AG04450 (cell line): ENCODE measurements at regions of chr7 and their contacts with region 1.

Region 1: GRCh38 chr7:35624299-35625186 is 70.4 kb downstream of the HERPUD2 start:
- DNase-seq: no peak
- H3K4me3 ChIP-seq: no peak overlapping the region
- H3K27ac ChIP-seq: no peak overlapping the region
- H3K27me3 ChIP-seq: no peaks in the 10 kb centered on the region
- CTCF ChIP-seq: peak; percentile 83

Region 2: GRCh38 chr7:35185907-35186731 is 438.4 kb before region 1 on chr7:
- CTCF ChIA-PET with region 1: interaction called, 10 read pairs
- POLR2A ChIA-PET with region 1: no interaction called
- DNase-seq: no peak
- H3K4me3 ChIP-seq: peak overlapping the region; percentile 54
- H3K27ac ChIP-seq: no peak overlapping the region
- H3K27me3 ChIP-seq: no peaks in the 10 kb centered on the region
- CTCF ChIP-seq: peak; percentile 22; the same call in 1 of the 2 replicates

Region 3: DNA sequence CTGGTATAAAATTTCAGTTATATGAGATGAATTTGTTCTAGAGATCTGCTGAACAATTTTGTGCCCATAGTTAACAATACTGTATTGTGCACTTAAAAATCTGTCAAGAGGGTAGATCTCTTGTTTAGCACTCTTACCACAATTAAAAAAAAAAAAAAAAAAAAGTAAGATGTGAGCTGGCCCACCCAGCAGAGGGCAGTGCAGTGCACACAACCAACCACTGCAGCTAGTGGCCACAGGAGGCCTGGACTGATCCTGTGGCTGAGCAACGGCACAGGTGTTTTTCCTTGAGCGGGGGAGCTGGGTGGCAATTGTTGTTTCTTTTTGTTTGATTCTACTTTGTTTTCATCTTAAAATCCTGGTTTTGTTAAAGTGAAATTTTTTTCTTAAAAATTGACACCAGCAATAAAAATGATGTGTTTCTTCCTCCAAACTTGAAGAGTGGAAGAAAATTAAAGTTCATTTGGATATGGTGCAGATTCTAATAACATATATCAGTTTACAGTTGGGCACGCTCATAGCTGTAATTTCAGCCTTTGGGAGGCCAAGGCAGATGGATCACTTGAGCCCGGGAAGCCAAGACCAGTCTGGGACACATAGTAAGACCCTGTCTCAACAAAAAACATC is 199.6 kb before region 1 on chr7:
- CTCF ChIA-PET with region 1: interaction called, 124 read pairs
- POLR2A ChIA-PET with region 1: no interaction called
- DNase-seq: peak; percentile 10
- H3K4me3 ChIP-seq: no peak overlapping the region
- H3K27ac ChIP-seq: no peak overlapping the region
- H3K27me3 ChIP-seq: no peaks in the 10 kb centered on the region
- CTCF ChIP-seq: peak; percentile 86

Region 4: GRCh38 chr7:35437619-35438275 is 186.8 kb before region 1 on chr7:
- CTCF ChIA-PET with region 1: no interaction called
- POLR2A ChIA-PET with region 1: no interaction called
- DNase-seq: no peak
- H3K4me3 ChIP-seq: no peak overlapping the region
- H3K27ac ChIP-seq: no peak overlapping the region
- H3K27me3 ChIP-seq: no peaks in the 10 kb centered on the region
- CTCF ChIP-seq: no peak

Region 5: DNA sequence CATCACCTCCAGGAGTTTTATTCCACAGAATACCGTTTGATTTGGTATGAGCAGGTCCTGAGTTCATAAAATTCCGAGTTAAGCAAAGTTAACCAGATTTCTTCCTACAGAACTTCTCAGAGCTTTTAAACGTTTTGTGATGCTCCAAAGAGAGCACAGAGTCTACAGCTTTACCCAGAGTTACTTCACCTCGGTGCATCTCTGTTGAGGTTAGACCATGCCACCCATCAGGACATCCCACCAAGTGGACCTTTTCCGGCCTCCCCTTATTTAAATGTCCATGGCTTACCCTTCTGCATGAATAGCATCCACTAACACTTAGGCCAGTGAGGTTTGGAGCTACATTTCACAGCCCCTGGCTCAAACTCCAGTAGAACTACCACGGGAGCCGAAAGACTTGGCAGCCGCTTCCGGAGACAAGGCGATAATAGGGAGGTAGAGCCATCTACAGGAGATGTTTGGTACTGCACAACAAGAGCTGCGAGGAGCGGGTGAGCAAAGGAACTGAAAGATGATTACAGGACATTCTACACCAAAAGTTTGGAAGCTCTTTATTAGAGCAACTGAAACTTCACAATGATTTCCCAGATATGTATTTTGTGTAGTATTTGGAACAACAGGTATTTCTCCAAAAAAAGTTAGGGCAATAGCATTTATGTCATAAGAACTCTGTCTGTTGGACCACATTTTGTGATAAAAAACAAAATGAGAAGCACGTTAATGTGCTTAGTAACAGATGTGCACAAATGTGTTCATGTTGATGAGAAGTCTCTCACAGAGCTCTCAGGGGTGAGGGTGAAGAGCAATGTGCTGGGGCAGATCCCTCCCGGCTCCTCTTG is 104.4 kb before region 1 on chr7:
- CTCF ChIA-PET with region 1: interaction called, 10 read pairs
- POLR2A ChIA-PET with region 1: no interaction called
- DNase-seq: peak; percentile 13
- H3K4me3 ChIP-seq: no peak overlapping the region
- H3K27ac ChIP-seq: no peak overlapping the region
- H3K27me3 ChIP-seq: no peaks in the 10 kb centered on the region
- CTCF ChIP-seq: peak; percentile 80

Region 6: GRCh38 chr7:35537067-35538023 is 87.2 kb before region 1 on chr7:
- CTCF ChIA-PET with region 1: interaction called, 11 read pairs
- POLR2A ChIA-PET with region 1: no interaction called
- DNase-seq: peak; percentile 18
- H3K4me3 ChIP-seq: peak overlapping the region; percentile 50
- H3K27ac ChIP-seq: no peak overlapping the region
- H3K27me3 ChIP-seq: peaks cover 9% of the 10 kb centered on the region
- CTCF ChIP-seq: peak; percentile 94

Region 7: GRCh38 chr7:35596061-35596460 is 28.5 kb before region 1 on chr7:
- CTCF ChIA-PET with region 1: interaction called, 22 read pairs
- POLR2A ChIA-PET with region 1: no interaction called
- DNase-seq: peak; percentile 23
- H3K4me3 ChIP-seq: no peak overlapping the region
- H3K27ac ChIP-seq: no peak overlapping the region
- H3K27me3 ChIP-seq: no peaks in the 10 kb centered on the region
- CTCF ChIP-seq: 0 out of 2 replicates have a peak, but pooled peaks have one; percentile 8